A549 (cell line): ENCODE measurements at regions of chr1 and their contacts with region 1.

Region 1: GRCh38 chr1:45569962-45570581 is 13.8 kb upstream of the NASP start:
- DNase-seq: peak; percentile 35 to 74
- ATAC-seq: peak; percentile 88 to 94
- H3K4me3 ChIP-seq: no peak overlapping the region
- H3K27ac ChIP-seq: no peak overlapping the region
- H3K4me1 ChIP-seq: no peaks in the 10 kb centered on the region
- CTCF ChIP-seq: peak; percentile 86
- EP300 ChIP-seq: no peak
- POLR2A ChIP-seq: no peak
- RAD21 ChIP-seq: peak; percentile 85 to 92

Region 2: DNA sequence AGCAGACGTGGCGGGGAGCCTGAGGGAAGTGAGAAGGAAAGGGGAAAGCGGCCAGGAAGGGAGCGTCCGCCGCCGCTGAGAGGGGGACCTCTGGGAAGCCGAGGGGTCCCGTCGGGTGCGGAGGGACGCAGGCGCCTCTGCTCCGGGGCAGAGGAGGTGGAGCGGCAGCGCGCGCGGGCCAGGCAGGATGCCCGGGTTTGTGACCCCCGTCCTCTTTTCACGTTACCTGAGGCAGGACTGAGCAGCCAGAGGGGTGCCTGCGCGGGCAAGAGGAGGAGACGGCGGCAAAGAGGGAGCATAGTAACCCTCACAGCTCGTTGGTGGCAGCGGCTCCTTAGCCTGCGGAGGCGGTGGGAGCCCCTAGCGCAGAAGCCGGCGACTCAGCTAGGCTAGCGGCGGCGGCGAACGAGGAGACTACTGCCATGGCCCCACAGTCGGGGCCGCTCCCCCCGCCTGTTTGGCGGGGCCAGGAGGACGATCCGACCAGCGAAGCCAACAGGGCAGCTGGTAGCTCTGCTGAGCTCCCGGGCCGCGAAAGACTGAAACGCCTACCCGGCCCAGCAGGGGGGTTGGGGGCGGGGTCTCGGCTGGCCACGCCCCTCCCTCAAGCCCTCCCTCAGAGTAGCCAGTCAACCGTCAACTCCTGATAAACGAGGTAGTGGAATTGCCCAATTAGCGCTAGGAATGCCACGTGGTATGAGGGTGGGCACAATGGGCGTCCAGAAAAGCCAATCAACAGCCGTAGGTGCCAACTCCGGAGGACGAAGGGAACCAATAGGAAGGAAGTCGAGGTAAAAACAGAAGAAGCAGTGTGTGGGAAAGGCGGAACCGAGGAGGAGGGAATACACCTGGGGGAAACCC is 79.2 kb before region 1 on chr1 and contains the start of gene TESK2:
- CTCF ChIA-PET with region 1: interaction called, 35 read pairs
- POLR2A ChIA-PET with region 1: interaction called, 3 read pairs
- DNase-seq: peak; percentile 93 to 99
- ATAC-seq: peak; percentile 92 to 97
- H3K4me3 ChIP-seq: peak within 1 kb of the TSS; percentile 57
- H3K27ac ChIP-seq: peak within 1 kb of the TSS; percentile 18 to 68; a peak in 4 of 6 replicates
- H3K4me1 ChIP-seq: no peaks in the 10 kb centered on the region; the same call in 2 of the 3 replicates
- CTCF ChIP-seq: no peak
- EP300 ChIP-seq: no peak
- POLR2A ChIP-seq: no peak
- RAD21 ChIP-seq: no peak
- polyA plus RNA-seq, gene TESK2: 0.48 and 0.58 TPM in 2 replicates

Region 3: DNA sequence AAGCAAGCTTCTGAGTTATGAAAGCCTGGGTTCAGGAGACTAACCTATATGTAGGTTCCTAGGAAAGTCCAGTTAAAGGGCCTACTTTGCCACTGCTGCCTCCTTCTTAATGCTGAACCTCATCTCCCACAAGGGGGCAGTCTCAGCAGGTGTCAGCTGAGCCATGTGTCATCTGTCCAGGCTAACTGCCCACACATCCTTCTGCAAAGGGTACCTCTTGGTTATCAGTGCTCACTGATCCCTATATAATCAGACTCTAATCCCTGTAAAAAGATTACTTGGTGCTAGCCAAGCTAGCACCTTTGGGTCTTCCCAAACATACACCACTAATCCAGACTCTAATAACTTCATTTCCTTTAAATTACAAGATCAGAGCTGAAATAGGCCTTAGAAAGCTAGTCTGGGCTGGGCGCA is 57.4 kb before region 1 on chr1:
- CTCF ChIA-PET with region 1: interaction called, 88 read pairs
- POLR2A ChIA-PET with region 1: no interaction called
- DNase-seq: peak in 1 of 2 experiments; percentile 74
- ATAC-seq: peak; percentile 31 to 50; a peak in 3 of 6 replicates
- H3K4me3 ChIP-seq: no peak overlapping the region
- H3K27ac ChIP-seq: no peak overlapping the region
- H3K4me1 ChIP-seq: peaks cover 64% of the 10 kb centered on the region
- CTCF ChIP-seq: peak; percentile 47
- EP300 ChIP-seq: no peak
- POLR2A ChIP-seq: no peak
- RAD21 ChIP-seq: peak; percentile 37 to 46; a peak in 3 of 5 replicates

Region 4: DNA sequence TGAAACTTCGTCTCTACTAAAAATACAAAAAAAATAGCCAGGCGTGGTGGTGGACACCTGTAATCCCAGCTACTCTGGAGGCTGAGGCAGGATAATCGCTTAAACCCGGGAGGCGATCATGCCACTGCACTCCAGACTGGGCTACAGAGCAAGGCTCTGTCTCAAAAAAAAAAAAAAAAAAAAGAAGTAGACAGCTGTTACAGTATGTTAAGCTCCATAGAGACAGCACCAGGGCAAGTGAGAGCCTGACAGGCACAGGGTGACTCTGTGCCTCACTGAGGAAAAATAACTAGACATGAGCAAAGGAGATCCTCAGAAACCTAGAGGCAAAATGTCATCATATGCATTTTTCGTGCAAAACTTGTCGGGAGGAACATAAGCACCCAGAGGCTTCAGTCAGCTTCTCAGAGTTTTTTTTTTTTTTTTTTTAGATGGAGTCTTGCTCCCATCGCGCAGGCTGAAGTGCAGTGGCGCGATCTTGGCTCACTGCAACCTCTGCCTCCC is 39.4 kb before region 1 on chr1:
- CTCF ChIA-PET with region 1: interaction called, 11 read pairs
- POLR2A ChIA-PET with region 1: no interaction called
- DNase-seq: no peak
- ATAC-seq: no peak
- H3K4me3 ChIP-seq: no peak overlapping the region
- H3K27ac ChIP-seq: no peak overlapping the region
- H3K4me1 ChIP-seq: peaks cover 17% of the 10 kb centered on the region
- CTCF ChIP-seq: no peak
- EP300 ChIP-seq: no peak
- POLR2A ChIP-seq: no peak
- RAD21 ChIP-seq: no peak

Region 5: DNA sequence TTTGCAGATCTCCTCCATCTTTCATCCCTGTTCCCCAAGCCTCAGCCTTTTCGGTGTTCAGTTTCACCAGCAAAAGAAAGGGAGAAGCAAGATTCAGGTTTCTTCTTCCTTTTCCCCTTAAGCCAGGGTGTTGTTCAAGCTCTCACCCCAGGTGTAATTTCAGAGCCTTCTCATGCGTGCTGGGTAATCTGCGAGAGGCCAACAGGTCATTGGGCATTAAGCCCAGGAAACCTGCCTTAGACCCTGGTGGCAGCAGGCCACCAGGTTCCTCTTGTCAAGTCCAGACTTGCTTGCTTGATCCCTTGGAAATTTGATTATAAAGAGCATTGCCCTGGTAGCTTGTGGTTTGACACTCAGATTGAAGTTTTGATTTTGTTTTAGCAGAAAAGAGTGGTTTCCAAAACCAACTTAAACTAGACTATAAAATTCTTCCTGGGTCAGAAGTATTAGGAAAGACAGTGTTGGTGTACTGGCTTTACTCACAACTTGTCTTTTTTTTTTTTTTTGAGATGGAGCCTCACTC is 12.6 kb before region 1 on chr1:
- CTCF ChIA-PET with region 1: interaction called, 20 read pairs
- POLR2A ChIA-PET with region 1: interaction called, 5 read pairs
- DNase-seq: no peak
- ATAC-seq: no peak
- H3K4me3 ChIP-seq: no peak overlapping the region
- H3K27ac ChIP-seq: peak overlapping the region; percentile 17 to 42; a peak in 1 of 6 replicates
- H3K4me1 ChIP-seq: peaks cover 21% of the 10 kb centered on the region
- CTCF ChIP-seq: no peak
- EP300 ChIP-seq: no peak
- POLR2A ChIP-seq: no peak
- RAD21 ChIP-seq: no peak

Region 6: DNA sequence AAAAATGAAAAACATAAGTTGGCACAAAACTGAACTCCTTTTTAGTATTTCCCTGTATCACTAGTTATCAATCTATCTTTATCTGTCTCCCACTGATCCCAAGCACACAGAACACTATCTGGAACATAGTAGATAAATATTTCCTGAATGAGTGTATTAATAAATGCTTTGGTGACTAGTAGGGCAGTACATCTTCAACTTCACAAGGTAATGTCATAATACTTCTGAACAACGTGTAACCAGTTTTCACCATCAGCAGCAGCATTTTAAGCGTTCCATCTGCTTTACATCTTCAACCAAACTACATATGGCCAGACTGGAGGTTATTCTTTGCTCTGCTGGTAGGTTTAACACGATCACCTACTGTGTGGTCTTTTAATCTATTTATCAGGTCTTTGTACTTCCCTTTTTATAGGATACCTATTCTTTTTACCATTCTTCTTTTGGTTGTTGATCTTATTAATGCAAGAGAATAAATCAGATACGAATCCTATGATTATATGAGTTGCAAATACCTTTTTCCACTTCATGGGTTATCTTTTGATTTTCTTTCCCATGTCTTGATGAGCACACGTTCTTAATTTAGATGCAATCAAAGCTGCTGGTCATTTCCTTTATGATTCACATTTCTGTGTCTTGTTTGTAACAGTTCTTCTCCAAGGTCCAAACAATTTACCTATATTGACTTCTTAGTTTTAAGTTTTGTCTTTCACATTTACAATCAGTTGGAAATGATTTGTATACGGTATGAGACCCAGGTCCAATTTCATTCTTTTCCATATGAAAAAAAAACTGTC is 100.0 kb after region 1 on chr1:
- CTCF ChIA-PET with region 1: no interaction called
- POLR2A ChIA-PET with region 1: no interaction called
- DNase-seq: no peak
- ATAC-seq: no peak
- H3K4me3 ChIP-seq: no peak overlapping the region
- H3K27ac ChIP-seq: no peak overlapping the region
- H3K4me1 ChIP-seq: peaks cover 29% of the 10 kb centered on the region
- CTCF ChIP-seq: no peak
- EP300 ChIP-seq: no peak
- POLR2A ChIP-seq: no peak
- RAD21 ChIP-seq: no peak